ENCODE measurements at regions of chr5 and their contacts with region 1.

Region 1: GRCh38 chr5:116557669-116558271 is 16.9 kb downstream of the SEMA6A start:
- DNase-seq: peak in 1 of 2 experiments; percentile 43
- H3K4me3 ChIP-seq: no peak overlapping the region
- H3K4me3 Mint-ChIP-seq: no peak overlapping the region
- H3K27ac Mint-ChIP-seq: no peak overlapping the region
- H3K4me1 ChIP-seq: no peaks in the 10 kb centered on the region; the same call in 1 of the 2 replicates
- H3K4me1 Mint-ChIP-seq: no peaks in the 10 kb centered on the region
- H3K27me3 ChIP-seq: no peaks in the 10 kb centered on the region
- H3K27me3 Mint-ChIP-seq: no peaks in the 10 kb centered on the region
- CTCF ChIP-seq: peak; percentile 55 to 69

Region 2: GRCh38 chr5:116191629-116192028 is 366.1 kb before region 1 on chr5:
- CTCF ChIA-PET with region 1: no interaction called
- POLR2A ChIA-PET with region 1: no interaction called
- intact Hi-C with region 1: no loop called
- DNase-seq: no peak
- H3K4me3 ChIP-seq: no peak overlapping the region
- H3K4me3 Mint-ChIP-seq: no peak overlapping the region
- H3K27ac Mint-ChIP-seq: no peak overlapping the region
- H3K4me1 ChIP-seq: no peaks in the 10 kb centered on the region
- H3K4me1 Mint-ChIP-seq: no peaks in the 10 kb centered on the region
- H3K27me3 ChIP-seq: no peaks in the 10 kb centered on the region
- H3K27me3 Mint-ChIP-seq: no peaks in the 10 kb centered on the region
- CTCF ChIP-seq: no peak

Region 3: DNA sequence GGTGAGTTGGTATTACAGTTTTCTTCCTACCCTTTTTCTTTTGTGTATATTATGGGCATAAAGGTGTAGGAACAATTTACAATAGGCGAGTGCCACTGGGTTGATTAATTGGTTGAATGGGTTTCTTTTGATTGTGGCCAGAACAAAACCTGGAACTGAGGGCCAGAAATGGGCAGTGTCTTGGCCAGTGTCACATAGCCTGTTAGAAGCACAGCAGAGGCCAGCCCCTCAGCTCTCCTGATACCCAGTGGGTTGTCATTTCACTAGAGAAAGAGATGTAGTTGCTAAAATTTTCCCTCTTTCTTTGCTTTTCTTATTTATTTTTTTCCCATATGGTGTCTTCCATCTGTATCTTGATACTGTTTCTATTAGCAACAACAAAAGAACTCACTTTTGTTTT is 55.7 kb after region 1 on chr5:
- CTCF ChIA-PET with region 1: no interaction called
- POLR2A ChIA-PET with region 1: no interaction called
- intact Hi-C with region 1: loop called (anchors 5 kb)
- DNase-seq: no peak
- H3K4me3 ChIP-seq: no peak overlapping the region
- H3K4me3 Mint-ChIP-seq: no peak overlapping the region
- H3K27ac Mint-ChIP-seq: no peak overlapping the region
- H3K4me1 ChIP-seq: no peaks in the 10 kb centered on the region
- H3K4me1 Mint-ChIP-seq: no peaks in the 10 kb centered on the region
- H3K27me3 ChIP-seq: no peaks in the 10 kb centered on the region
- H3K27me3 Mint-ChIP-seq: peaks cover 3% of the 10 kb centered on the region
- CTCF ChIP-seq: no peak

Measured in Caco-2 (cell line).